ENCODE measurements at regions of chr5 and their contacts with region 1.

Region 1: GRCh38 chr5:35822511-35822910 is 34.2 kb upstream of the IL7R start:
- DNase-seq: peak in 4 of 5 donors; percentile 8 to 80 (median 65)
- H3K4me3 ChIP-seq: peak overlapping the region; percentile 11
- H3K4me3 Mint-ChIP-seq: peak overlapping the region; percentile 59 to 83 (median 74)
- H3K27ac ChIP-seq: no peak overlapping the region
- H3K27ac Mint-ChIP-seq: peak overlapping the region; percentile 83 to 99 (median 93)
- H3K4me1 ChIP-seq: peaks cover 97% of the 10 kb centered on the region
- H3K4me1 Mint-ChIP-seq: peaks cover 0 to 91% (median 89%) of the 10 kb centered on the region in 3 donors
- H3K27me3 ChIP-seq: no peaks in the 10 kb centered on the region
- H3K27me3 Mint-ChIP-seq: no peaks in the 10 kb centered on the region

Region 2: DNA sequence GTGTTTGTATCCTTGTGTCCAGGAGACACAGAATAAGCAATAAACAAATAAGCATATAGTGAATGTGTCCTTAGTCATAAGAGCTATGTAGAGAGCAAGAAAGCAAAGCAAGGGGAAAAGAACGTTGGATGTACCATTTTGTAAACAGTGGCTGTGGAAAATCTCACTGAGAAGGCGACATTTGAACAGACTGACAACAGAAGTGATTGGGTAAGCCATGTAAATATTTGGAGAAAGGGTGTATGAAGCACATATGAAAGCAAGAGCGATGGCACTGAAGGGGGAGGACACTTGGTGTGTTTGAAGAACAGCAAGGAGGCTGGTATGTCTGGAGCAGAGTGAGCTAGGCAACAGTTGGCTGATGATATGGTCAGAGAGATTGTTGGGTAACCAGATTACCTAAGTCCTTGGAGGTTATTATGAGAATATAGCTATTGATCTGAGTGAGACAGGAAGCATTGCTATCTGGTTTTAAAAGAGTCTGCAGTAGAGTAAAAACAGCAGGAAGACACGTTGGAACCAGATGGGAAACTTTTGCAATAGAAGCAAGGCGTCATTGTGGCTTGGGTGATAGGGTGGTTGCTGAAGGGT is 81.3 kb before region 1 on chr5:
- CTCF ChIA-PET with region 1: no interaction called
- POLR2A ChIA-PET with region 1: no interaction called
- DNase-seq: no peak
- H3K4me3 ChIP-seq: no peak overlapping the region
- H3K4me3 Mint-ChIP-seq: no peak overlapping the region
- H3K27ac ChIP-seq: no peak overlapping the region
- H3K27ac Mint-ChIP-seq: no peak overlapping the region
- H3K4me1 ChIP-seq: no peaks in the 10 kb centered on the region
- H3K4me1 Mint-ChIP-seq: peaks cover 4 to 21% (median 6%) of the 10 kb centered on the region in 3 donors
- H3K27me3 ChIP-seq: no peaks in the 10 kb centered on the region
- H3K27me3 Mint-ChIP-seq: peaks cover 0 to 7% of the 10 kb centered on the region in 2 donors

Region 3: GRCh38 chr5:35863159-35863558 is 40.6 kb after region 1 on chr5:
- CTCF ChIA-PET with region 1: interaction called, 165 read pairs
- POLR2A ChIA-PET with region 1: interaction called, 125 read pairs
- DNase-seq: no peak
- H3K4me3 ChIP-seq: peak overlapping the region; percentile 93
- H3K4me3 Mint-ChIP-seq: peak overlapping the region; percentile 93 to 99 (median 97)
- H3K27ac ChIP-seq: no peak overlapping the region
- H3K27ac Mint-ChIP-seq: peak overlapping the region; percentile 40 to 99 (median 96)
- H3K4me1 ChIP-seq: peaks cover 49% of the 10 kb centered on the region
- H3K4me1 Mint-ChIP-seq: peaks cover 66 to 84% (median 73%) of the 10 kb centered on the region in 3 donors
- H3K27me3 ChIP-seq: no peaks in the 10 kb centered on the region
- H3K27me3 Mint-ChIP-seq: no peaks in the 10 kb centered on the region

Region 4: DNA sequence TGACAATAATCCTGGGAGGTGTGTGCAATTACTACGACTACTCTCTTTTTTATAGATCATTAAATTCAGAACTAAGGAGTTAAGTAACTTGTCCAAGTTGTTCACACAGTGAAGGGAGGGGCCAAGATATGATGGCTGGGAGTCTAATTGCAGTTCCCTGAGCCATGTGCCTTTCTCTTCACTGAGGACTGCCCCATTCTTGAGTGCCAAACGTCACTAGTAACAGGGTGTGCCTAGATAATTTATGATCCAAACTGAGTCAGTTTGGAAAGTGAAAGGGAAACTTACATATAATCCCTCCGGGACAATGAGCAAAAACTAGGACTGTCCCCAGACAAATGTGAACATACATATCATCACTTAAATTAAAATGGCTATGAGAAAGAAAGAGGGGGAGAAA is 54.4 kb after region 1 on chr5:
- CTCF ChIA-PET with region 1: interaction called, 5 read pairs
- POLR2A ChIA-PET with region 1: interaction called, 23 read pairs
- DNase-seq: no peak
- H3K4me3 ChIP-seq: no peak overlapping the region
- H3K4me3 Mint-ChIP-seq: peak overlapping the region in 4 of 7 donors; percentile 9 to 57 (median 19)
- H3K27ac ChIP-seq: no peak overlapping the region
- H3K27ac Mint-ChIP-seq: peak overlapping the region; percentile 61 to 91 (median 79)
- H3K4me1 ChIP-seq: peaks cover 62% of the 10 kb centered on the region
- H3K4me1 Mint-ChIP-seq: peaks cover 76 to 96% (median 93%) of the 10 kb centered on the region in 3 donors
- H3K27me3 ChIP-seq: no peaks in the 10 kb centered on the region
- H3K27me3 Mint-ChIP-seq: no peaks in the 10 kb centered on the region